ENCODE measurements at regions of chr22 and their contacts with region 1.

Region 1: DNA sequence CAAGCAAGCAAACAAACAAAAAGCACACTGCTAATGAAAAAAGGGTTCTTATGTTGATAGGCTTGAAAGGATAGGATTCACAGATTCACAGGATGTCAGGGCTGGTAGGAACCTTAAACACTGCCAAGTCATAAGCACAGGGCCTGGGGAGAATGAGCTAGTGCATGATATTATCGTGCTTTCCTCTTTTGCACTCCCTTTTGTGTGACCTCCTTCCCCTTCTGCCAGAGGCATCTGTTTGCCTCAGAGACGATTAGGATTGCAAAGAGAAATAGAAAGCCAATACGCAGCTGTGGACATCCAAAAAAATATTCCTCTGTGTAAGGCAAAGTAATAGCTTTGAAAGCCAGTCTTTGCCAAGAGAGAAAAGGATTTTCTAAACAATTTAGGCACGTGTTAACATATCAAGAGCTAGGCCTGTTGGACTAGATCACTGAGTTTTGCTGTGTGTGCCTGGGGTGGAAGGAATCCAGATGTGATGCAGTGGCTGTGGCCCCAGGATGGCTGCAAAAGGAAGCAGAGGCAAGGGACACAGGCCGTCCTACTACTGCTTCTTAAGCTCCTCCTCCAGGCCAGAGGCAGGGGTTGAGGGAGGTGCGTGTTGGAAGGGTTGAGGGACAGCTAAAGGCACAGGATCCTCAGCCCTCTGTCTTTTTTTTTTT is 30.6 kb downstream of the MCHR1 start:
- DNase-seq: no peak
- ATAC-seq: no peak
- H3K4me3 Mint-ChIP-seq: no peak overlapping the region
- H3K27ac Mint-ChIP-seq: peak overlapping the region in 5 of 10 donors; percentile 15 to 69 (median 28)
- H3K4me1 Mint-ChIP-seq: peaks cover 9 to 21% (median 14%) of the 10 kb centered on the region in 4 donors
- H3K27me3 Mint-ChIP-seq: no peaks in the 10 kb centered on the region

Region 2: GRCh38 chr22:40728731-40729189 is 18.9 kb after region 1 on chr22:
- POLR2A ChIA-PET with region 1: interaction called, 16 read pairs
- DNase-seq: peak; percentile 43 to 91 (median 74)
- ATAC-seq: peak; percentile 73 to 79
- H3K4me3 Mint-ChIP-seq: peak overlapping the region; percentile 46 to 82 (median 73)
- H3K27ac Mint-ChIP-seq: peak overlapping the region; percentile 95 to 99 (median 96)
- H3K4me1 Mint-ChIP-seq: peaks cover 25 to 63% (median 59%) of the 10 kb centered on the region in 4 donors
- H3K27me3 Mint-ChIP-seq: no peaks in the 10 kb centered on the region

Region 3: GRCh38 chr22:40856513-40857308 is 146.8 kb after region 1 on chr22 and contains the starts of genes ST13 and XPNPEP3:
- POLR2A ChIA-PET with region 1: no interaction called
- DNase-seq: peak; percentile 95 to 99 (median 97)
- ATAC-seq: peak; percentile 88 to 89
- H3K4me3 Mint-ChIP-seq: peak within 1 kb of the TSS; percentile 97 to 100 (median 99)
- H3K27ac Mint-ChIP-seq: peak within 1 kb of the TSS; percentile 98 to 100 (median 100)
- H3K4me1 Mint-ChIP-seq: peaks cover 9 to 69% (median 63%) of the 10 kb centered on the region in 4 donors
- H3K27me3 Mint-ChIP-seq: no peaks in the 10 kb centered on the region
- polyA plus RNA-seq, gene ST13: 244 to 283 (median 260) TPM
- polyA plus RNA-seq, gene XPNPEP3: 5.9 to 11.5 (median 7.1) TPM